PC-9 (cell line): ENCODE measurements at regions of chr10 and their contacts with region 1.

Region 1: GRCh38 chr10:93445097-93445960 is 36.8 kb downstream of the MYOF start:
- DNase-seq: peak; percentile 92 to 96
- H3K4me3 ChIP-seq: no peak overlapping the region
- H3K27ac ChIP-seq: peak overlapping the region; percentile 63
- H3K4me1 ChIP-seq: peaks cover 54% of the 10 kb centered on the region
- H3K27me3 ChIP-seq: no peaks in the 10 kb centered on the region
- CTCF ChIP-seq: no peak

Region 2: DNA sequence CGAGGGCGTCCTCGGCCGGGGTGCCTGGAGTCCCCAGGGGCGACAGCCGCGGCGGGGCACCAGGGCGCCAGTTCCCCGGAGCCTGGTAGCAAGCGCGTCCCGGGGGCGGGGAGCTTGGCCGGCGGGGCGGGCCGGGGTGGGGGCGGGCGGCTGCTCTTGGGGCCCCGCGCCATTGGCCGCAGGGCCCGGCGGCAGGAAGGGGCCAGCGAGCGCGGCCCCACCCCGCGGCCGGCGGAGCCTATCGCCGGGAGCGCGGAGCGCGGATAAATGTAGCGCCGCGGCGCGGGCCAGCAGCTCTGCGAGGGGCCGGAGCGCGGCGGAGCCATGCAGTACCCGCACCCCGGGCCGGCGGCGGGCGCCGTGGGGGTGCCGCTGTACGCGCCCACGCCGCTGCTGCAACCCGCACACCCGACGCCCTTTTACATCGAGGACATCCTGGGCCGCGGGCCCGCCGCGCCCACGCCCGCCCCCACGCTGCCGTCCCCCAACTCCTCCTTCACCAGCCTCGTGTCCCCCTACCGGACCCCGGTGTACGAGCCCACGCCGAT is 755.6 kb before region 1 on chr10 and contains the start of gene HHEX:
- CTCF ChIA-PET with region 1: interaction called, 13 read pairs
- POLR2A ChIA-PET with region 1: no interaction called
- intact Hi-C with region 1: no loop called
- DNase-seq: peak; percentile 48 to 61
- H3K4me3 ChIP-seq: peak within 1 kb of the TSS; percentile 83
- H3K27ac ChIP-seq: no peak within 1 kb of the TSS
- H3K4me1 ChIP-seq: peaks cover 9% of the 10 kb centered on the region; the same call in 1 of the 2 replicates
- H3K27me3 ChIP-seq: no peaks in the 10 kb centered on the region
- CTCF ChIP-seq: no peak
- total RNA-seq, gene HHEX: 5.8 and 7.8 TPM in 2 replicates

Region 3: DNA sequence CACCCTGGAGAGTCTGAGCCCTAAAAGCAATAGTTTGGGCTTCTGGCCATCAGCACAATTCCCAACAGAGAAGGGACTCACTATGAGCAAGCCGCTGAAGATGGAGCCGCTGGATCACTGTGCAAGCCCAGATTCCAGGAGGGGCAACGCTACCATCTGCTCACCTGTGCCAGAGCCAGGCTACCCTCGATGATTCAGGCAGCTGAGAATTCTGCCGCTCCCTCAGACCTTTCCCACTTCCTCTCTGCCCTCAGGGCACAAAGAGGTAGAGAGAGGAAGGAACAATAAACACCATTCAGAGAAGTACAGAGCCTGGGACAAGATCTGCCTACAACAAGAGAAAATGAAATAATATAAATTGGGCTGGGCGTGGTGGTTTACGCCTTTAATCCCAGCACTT is 61.3 kb before region 1 on chr10:
- CTCF ChIA-PET with region 1: no interaction called
- POLR2A ChIA-PET with region 1: no interaction called
- intact Hi-C with region 1: loop called (anchors 2 kb)
- DNase-seq: peak; percentile 85 to 95
- H3K4me3 ChIP-seq: peak overlapping the region; percentile 49; the same call in 1 of the 2 replicates
- H3K27ac ChIP-seq: peak overlapping the region; percentile 98
- H3K4me1 ChIP-seq: peaks cover 23% of the 10 kb centered on the region
- H3K27me3 ChIP-seq: no peaks in the 10 kb centered on the region
- CTCF ChIP-seq: no peak

Region 4: DNA sequence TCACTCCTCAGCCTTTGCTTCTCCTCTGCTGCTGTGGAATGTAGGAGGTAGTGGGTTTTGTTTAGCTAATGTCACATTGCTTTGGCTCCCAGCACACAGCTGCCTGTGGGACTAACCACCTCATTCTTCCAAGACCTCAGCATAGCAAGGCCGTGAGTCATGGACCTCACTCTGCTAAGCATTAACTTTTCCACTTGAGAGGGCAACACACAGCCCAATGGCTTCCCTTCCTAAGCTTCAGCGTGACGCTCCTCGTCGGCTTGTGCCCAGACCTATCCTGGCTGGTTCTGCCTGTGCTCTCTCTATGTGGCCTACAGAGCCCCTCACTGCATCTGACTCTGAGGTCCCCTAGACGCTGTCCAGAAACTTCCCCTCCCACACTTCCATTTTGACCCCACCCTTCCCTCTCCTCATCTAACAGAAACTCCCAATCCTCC is 13.5 kb after region 1 on chr10:
- CTCF ChIA-PET with region 1: interaction called, 3 read pairs
- POLR2A ChIA-PET with region 1: interaction called, 5 read pairs
- intact Hi-C with region 1: loop called (anchors 1 kb)
- DNase-seq: peak; percentile 86 to 91
- H3K4me3 ChIP-seq: no peak overlapping the region
- H3K27ac ChIP-seq: peak overlapping the region; percentile 90
- H3K4me1 ChIP-seq: peaks cover 14% of the 10 kb centered on the region
- H3K27me3 ChIP-seq: no peaks in the 10 kb centered on the region
- CTCF ChIP-seq: no peak

Region 5: GRCh38 chr10:93471110-93471651 is 25.9 kb after region 1 on chr10:
- CTCF ChIA-PET with region 1: interaction called, 4 read pairs
- POLR2A ChIA-PET with region 1: interaction called, 11 read pairs
- intact Hi-C with region 1: loop called (anchors 1 kb)
- DNase-seq: peak in 1 of 2 experiments; percentile 81
- H3K4me3 ChIP-seq: 0 out of 2 replicates have a peak overlapping the region, but pooled peaks have one; percentile 8
- H3K27ac ChIP-seq: peak overlapping the region; percentile 97
- H3K4me1 ChIP-seq: peaks cover 70% of the 10 kb centered on the region
- H3K27me3 ChIP-seq: no peaks in the 10 kb centered on the region
- CTCF ChIP-seq: no peak